ENCODE measurements at regions of chr5 and their contacts with region 1.

Region 1: GRCh38 chr5:59810041-59810440 is 83.5 kb downstream of the PDE4D start:
- DNase-seq: peak; percentile 49 to 71
- ATAC-seq: peak; percentile 69

Region 2: DNA sequence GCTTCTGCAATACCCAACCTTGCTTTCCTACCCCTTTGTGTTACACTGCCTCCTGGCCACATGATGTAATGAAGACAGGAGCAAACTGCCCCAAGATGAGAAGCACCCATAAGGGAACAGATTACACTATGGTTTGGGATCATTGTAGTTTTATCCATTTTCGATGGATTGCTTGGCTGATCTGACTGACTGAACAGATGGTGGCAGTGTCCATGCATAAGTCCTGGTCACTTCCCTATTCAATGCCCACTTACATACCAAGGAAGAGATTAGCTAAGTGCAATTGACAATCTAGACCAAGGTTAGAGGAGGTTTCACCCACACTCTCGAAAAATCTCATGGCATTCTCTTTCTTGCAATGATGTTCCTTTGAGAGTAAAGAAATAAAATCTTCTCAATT is 907.3 kb before region 1 on chr5:
- intact Hi-C with region 1: no loop called
- DNase-seq: no peak
- ATAC-seq: no peak

Region 3: DNA sequence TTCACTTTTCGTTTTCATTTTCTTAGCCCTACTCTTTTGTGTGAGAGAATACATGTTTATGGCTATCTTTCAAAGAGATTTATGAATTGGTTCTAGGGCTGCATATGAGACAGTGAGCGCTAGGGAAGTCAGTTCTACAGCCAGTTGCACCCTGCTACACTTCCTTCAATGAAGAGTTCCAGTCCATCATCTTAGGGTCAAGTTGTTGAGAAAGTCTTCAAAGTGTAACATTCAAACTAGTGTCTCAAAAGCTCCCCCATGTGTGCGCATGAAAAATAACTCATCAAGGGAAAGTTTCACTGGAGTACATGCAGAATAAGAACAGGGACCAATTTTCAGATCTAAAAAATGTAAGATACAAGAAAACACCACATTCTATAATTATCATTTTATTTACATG is 572.7 kb after region 1 on chr5:
- intact Hi-C with region 1: loop called in 1 of 2 experiments (anchors 5 kb)
- DNase-seq: no peak
- ATAC-seq: no peak

Region 4: GRCh38 chr5:60586307-60586901 is 776.4 kb after region 1 on chr5:
- intact Hi-C with region 1: loop called in 1 of 2 experiments (anchors 5 kb)
- DNase-seq: no peak
- ATAC-seq: peak; percentile 44

Region 5: DNA sequence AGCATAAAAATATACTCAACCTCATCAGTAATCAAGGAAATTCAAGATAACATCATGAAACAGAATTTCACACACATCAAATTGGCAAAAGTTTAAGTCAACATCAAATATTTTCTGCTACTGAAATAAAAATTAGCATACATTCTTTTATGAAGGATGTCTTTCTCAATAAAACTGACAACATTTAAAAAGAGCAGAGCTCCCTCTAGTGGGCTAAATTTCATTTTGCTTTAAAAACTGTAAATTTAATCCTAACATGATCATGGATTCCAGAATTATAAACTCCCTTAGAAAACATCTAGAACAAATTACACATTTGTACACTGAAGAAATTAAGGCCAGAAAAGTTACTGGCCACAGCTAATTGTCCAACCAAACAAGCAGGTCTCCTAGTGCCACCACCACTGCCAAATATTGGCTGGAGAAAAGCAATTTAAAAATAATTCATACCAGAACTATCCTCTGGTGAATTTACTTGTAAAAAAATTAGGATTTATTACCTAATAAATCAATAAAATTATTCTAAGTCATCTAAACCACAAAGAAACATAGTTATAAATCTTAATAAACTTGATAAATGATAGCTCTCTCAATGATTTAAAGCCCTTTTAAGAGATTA is 858.8 kb after region 1 on chr5:
- intact Hi-C with region 1: loop called in 1 of 2 experiments (anchors 10 kb)
- DNase-seq: no peak
- ATAC-seq: no peak